Activated CD8-positive, alpha-beta T cell treated with anti-CD3 and anti-CD28 coated beads for 36 hours (primary cell): ENCODE measurements at regions of chr5 and their contacts with region 1.

Region 1: DNA sequence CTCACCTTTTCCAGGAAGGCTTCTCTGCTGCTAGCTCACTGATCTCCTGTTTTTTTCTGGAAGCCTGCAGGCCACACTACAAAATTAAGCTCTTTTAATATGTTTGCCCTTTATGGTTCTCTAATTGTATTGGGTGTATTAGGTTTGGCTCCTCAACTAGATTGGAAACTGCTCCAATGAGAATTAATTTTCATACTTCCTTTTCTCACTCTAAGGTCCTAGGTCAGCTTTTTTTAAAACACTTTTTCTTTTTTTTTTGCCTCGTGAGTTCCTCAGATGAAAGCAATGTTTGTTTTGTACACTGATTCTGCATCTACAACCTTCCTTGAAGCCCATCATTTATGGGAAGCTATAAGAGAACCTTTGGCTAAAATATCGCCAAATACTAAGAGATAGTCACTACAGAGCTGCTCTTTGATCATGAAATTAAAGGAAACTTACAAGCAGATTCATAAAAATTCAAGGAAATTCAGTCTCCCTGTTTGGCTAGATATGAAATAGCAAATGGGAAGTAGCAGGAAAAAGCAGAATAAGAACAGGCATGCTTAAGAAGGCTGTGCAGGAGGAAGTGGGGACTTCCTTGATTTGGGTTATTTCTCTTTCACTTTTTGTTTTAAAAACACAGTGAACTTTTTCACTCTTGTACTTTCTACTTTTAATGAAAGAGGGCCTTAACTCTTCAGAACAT is 55.2 kb upstream of the FYB1 start:
- DNase-seq: no peak
- ATAC-seq: peak; percentile 59
- H3K4me3 Mint-ChIP-seq: peak overlapping the region; percentile 79
- H3K27ac Mint-ChIP-seq: peak overlapping the region; percentile 99
- H3K4me1 Mint-ChIP-seq: peaks cover 49% of the 10 kb centered on the region
- H3K27me3 Mint-ChIP-seq: no peaks in the 10 kb centered on the region
- CTCF ChIP-seq: no peak

Region 2: GRCh38 chr5:39238366-39239105 is 36.0 kb before region 1 on chr5:
- CTCF ChIA-PET with region 1: no interaction called
- POLR2A ChIA-PET with region 1: no interaction called
- intact Hi-C with region 1: loop called (anchors 5 kb)
- DNase-seq: no peak
- ATAC-seq: no peak
- H3K4me3 Mint-ChIP-seq: no peak overlapping the region
- H3K27ac Mint-ChIP-seq: peak overlapping the region; percentile 31
- H3K4me1 Mint-ChIP-seq: peaks cover 17% of the 10 kb centered on the region
- H3K27me3 Mint-ChIP-seq: no peaks in the 10 kb centered on the region
- CTCF ChIP-seq: no peak

Region 3: DNA sequence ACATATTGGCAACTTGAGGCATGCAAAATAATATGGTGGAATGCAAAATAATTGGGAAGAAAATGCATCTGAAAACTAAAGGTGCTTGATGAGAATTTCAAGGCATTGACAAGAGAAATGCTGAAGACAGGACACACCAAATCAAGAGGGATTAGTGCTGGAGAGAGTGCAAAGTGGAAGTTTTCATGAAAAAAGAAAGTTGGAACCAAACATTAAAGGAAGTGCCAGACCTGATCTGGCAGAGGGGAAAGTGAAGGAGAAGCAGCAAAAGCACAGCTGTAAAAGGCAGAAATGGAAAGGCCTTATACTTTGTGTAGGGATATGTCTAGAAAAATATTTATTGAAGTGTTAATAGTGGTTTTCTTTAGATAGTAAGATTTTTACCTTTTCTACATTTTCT is 19.9 kb before region 1 on chr5:
- CTCF ChIA-PET with region 1: no interaction called
- POLR2A ChIA-PET with region 1: no interaction called
- intact Hi-C with region 1: no loop called
- DNase-seq: no peak
- ATAC-seq: no peak
- H3K4me3 Mint-ChIP-seq: no peak overlapping the region
- H3K27ac Mint-ChIP-seq: no peak overlapping the region
- H3K4me1 Mint-ChIP-seq: peaks cover 21% of the 10 kb centered on the region
- H3K27me3 Mint-ChIP-seq: no peaks in the 10 kb centered on the region
- CTCF ChIP-seq: no peak

Region 4: DNA sequence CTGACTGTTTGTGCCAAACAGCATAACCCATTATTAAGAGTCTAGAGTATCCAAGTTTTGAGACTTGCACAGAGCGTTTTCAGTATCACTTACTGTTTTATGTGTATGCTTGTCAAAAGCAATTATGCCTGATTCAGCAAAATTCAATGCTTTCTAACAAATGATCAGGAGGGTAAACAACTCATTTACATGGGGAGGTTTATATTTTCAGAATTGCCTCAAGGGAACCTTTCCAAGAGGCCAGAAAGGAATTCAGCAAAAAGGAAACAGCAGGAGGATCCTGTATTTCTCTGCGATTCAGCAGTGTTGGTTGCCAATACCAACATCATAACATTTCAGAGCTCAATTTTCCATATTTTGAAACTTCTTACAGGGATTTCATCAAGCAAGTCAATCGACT is 219.6 kb after region 1 on chr5:
- CTCF ChIA-PET with region 1: no interaction called
- POLR2A ChIA-PET with region 1: no interaction called
- intact Hi-C with region 1: no loop called
- DNase-seq: no peak
- ATAC-seq: no peak
- H3K4me3 Mint-ChIP-seq: no peak overlapping the region
- H3K27ac Mint-ChIP-seq: no peak overlapping the region
- H3K4me1 Mint-ChIP-seq: no peaks in the 10 kb centered on the region
- H3K27me3 Mint-ChIP-seq: no peaks in the 10 kb centered on the region
- CTCF ChIP-seq: no peak